Dendritic cell treated with granulocyte-macrophage colony-stimulating factor and Interleukin-4, amounts not matched to agents 40 ng/mL and 50 ng/mL, for 4 days (primary cell): ENCODE measurements at regions of chrX and their contacts with region 1.

Region 1: DNA sequence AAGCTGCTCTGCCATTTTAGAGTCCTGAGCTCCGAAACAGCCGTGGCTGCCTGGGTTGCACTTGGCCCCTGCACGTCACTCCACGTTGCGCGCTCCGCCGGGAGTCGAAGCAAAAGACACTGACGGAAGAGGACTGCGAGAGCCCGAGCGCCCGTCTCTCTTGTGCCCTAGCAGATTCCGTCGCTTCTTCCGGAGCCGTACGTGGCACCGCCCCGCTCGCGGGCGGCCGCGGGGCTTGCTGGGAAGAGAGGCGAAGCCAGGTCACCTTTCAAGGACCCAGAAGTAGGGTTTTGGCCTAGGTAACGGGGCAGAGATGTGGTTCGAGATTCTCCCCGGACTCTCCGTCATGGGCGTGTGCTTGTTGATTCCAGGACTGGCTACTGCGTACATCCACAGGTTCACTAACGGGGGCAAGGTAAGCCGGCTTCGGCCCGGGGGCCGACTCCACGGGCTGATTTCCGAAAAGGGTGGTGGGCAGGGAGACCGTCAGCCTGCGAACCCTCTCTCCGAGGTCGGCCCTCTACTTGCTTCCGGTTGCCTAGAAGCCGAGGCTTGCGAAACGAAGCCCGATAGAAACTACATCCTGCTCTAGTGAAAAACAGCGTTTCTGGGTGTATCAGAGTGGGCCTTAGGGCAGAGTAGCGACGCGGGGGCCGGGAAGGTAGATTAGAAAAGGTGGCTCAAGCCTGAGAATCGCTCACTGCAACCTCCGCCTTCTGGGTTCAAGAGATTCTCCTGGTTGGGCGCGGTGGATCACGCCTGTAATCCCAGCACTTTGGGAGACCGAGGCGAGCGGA is at the starts of genes NDUFA1 and RNF113A:
- H3K4me3 Mint-ChIP-seq: peak within 1 kb of the TSS; percentile 94
- H3K27ac Mint-ChIP-seq: peak within 1 kb of the TSS; percentile 98
- H3K4me1 Mint-ChIP-seq: peaks cover 12% of the 10 kb centered on the region
- H3K27me3 Mint-ChIP-seq: no peaks in the 10 kb centered on the region

Region 2: GRCh38 chrX:119852382-119853353 is 19.1 kb before region 1 on chrX and contains the start of gene UPF3B:
- intact Hi-C with region 1: loop called (anchors 2 kb)
- H3K4me3 Mint-ChIP-seq: peak within 1 kb of the TSS; percentile 93
- H3K27ac Mint-ChIP-seq: peak within 1 kb of the TSS; percentile 92
- H3K4me1 Mint-ChIP-seq: peaks cover 6% of the 10 kb centered on the region
- H3K27me3 Mint-ChIP-seq: no peaks in the 10 kb centered on the region

Region 3: DNA sequence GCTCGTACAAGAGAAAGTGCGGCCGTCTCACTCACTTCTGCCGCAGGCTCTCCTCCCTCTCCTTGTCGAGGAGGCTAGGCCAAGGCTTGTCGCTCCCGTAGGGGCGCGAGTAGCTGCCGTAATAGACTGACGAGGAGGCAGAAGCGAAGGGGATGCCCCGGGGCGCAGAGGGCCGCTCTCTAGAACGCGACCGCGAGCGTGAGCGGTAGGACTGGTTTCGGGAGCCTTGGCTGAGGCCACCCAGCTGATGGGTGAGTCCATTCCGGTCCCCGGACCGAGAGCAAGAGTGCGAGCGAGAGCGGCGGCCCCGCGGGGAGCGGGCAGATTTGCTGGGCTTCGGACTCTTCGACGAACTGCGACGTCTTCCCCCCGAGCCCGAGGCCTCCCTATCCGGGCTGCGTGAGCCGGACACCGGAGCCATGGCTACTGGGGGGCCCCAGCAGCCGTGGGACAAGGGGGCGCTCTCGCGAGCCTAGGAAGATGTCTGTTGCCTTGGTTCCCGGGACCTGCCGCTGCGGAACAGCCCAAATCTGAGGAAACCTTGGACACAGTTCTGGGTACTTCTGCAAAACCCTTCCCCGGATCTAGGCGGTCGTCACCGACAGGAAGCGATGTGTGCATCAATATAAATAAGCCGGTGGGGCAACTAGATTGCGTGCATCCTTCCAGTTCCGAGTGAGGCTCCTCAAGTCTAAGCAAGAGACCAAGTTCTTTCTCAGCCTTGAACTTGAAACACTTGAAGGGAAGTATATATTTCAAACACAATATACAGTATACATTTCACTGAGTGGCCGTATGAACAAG is 71.6 kb after region 1 on chrX and contains the start of gene NKAP:
- intact Hi-C with region 1: loop called (anchors 10 kb)
- H3K4me3 Mint-ChIP-seq: peak within 1 kb of the TSS; percentile 94
- H3K27ac Mint-ChIP-seq: peak within 1 kb of the TSS; percentile 85
- H3K4me1 Mint-ChIP-seq: peaks cover 19% of the 10 kb centered on the region
- H3K27me3 Mint-ChIP-seq: no peaks in the 10 kb centered on the region

Region 4: DNA sequence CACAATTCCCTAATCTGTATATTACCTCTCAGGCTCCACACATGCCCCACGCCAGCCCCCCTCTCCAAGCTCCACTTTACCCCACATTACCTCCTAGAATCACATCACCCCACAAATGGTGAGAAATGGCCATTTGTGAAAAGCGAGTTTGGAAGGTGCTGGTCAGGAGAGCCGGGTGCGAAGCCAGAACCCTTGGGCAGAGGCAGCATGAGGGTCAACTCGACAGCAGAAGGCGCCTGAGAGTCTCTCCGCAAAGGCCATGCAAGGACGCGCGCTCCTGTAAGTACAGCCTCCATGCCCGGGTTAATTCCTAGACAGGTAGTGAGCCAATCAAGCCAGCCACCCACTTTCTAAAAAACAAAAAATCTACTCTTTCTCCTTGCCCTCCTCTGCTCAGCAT is 329.1 kb after region 1 on chrX:
- intact Hi-C with region 1: no loop called
- H3K4me3 Mint-ChIP-seq: no peak overlapping the region
- H3K27ac Mint-ChIP-seq: no peak overlapping the region
- H3K4me1 Mint-ChIP-seq: peaks cover 8% of the 10 kb centered on the region
- H3K27me3 Mint-ChIP-seq: no peaks in the 10 kb centered on the region